ENCODE measurements at regions of chr21 and their contacts with region 1.

Region 1: GRCh38 chr21:15992171-15992570 is 262.4 kb downstream of the USP25 start:
- DNase-seq: no peak
- H3K4me3 ChIP-seq: no peak overlapping the region
- H3K27ac ChIP-seq: no peak overlapping the region
- H3K27me3 ChIP-seq: no peaks in the 10 kb centered on the region
- CTCF ChIP-seq: no peak

Region 2: GRCh38 chr21:15894596-15894995 is 97.6 kb before region 1 on chr21:
- intact Hi-C with region 1: no loop called
- DNase-seq: no peak
- H3K4me3 ChIP-seq: peak overlapping the region in 2 of 59 donors; percentile 4
- H3K27ac ChIP-seq: no peak overlapping the region
- H3K27me3 ChIP-seq: no peaks in the 10 kb centered on the region
- CTCF ChIP-seq: peak in 54 of 56 donors; percentile 33 to 75 (median 56)

Region 3: GRCh38 chr21:16002874-16003466 is 10.8 kb after region 1 on chr21:
- intact Hi-C with region 1: loop called in 1 of 2 experiments (anchors 1 kb)
- DNase-seq: no peak
- H3K4me3 ChIP-seq: no peak overlapping the region
- H3K27ac ChIP-seq: no peak overlapping the region
- H3K27me3 ChIP-seq: no peaks in the 10 kb centered on the region
- CTCF ChIP-seq: peak in 55 of 56 donors; percentile 40 to 80 (median 64)

Region 4: DNA sequence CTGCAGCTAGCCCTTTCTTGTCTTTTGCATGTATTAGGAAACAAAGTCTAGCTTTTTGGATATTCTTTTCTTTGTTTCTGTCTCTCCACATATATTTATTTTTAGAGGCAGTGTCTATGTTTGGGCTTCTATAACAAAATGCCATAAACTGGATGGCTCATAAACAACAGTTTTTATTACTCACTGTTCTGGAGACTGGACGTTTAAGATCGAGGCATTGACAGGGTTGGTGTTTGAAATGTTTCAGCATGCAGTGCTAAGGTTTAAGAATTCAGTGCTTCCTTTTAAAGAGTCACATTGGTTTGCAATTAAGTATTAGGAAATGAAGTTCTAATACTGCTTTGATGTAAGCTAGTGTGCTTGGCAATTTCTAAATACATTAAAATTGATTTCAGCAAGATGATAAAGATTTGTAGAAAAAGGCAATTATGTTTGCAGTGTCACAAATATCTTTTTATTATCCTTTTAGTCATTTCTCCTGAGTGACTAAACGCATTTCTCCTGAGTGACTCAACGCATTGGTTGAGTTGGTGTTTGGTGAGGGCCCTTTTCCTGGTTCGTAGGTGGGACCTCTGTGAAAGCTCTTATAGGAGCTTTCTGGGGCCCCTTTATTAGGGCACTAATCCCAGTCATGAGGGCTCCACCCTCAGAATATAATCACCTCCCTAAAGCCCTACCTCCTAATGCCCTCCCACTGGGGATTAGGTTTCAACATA is 54.6 kb after region 1 on chr21:
- intact Hi-C with region 1: no loop called
- DNase-seq: no peak
- H3K4me3 ChIP-seq: no peak overlapping the region
- H3K27ac ChIP-seq: no peak overlapping the region
- H3K27me3 ChIP-seq: no peaks in the 10 kb centered on the region
- CTCF ChIP-seq: no peak

Region 5: DNA sequence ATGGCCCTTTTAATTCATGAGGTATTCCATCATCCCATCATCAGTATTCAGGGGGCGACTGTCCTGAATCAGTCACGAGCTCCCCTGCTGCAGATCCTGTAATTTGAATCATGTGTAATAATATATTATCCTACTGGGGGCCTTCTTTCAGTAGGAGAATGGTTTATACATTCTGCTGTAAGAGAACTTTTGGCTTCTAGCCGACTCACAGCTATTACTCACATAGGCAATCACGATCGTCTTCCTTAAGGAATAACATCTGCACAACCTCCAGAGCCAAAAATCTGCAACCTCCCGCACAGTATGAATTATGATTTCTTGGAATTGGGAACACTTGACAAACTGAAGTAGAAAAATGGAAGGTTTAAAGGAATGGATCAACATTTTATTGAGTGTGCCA is 80.6 kb after region 1 on chr21:
- intact Hi-C with region 1: no loop called
- DNase-seq: peak in 4 of 10 donors; percentile 13 to 51 (median 38)
- H3K4me3 ChIP-seq: peak overlapping the region; percentile 26 to 77 (median 62)
- H3K27ac ChIP-seq: peak overlapping the region; percentile 79 to 99 (median 97)
- H3K27me3 ChIP-seq: no peaks in the 10 kb centered on the region
- CTCF ChIP-seq: peak in 1 of 56 donors; percentile 11

Measured in dorsolateral prefrontal cortex (tissue), 120 donors.